IMR-90 (cell line): ENCODE measurements at regions of chr10 and their contacts with region 1.

Region 1: DNA sequence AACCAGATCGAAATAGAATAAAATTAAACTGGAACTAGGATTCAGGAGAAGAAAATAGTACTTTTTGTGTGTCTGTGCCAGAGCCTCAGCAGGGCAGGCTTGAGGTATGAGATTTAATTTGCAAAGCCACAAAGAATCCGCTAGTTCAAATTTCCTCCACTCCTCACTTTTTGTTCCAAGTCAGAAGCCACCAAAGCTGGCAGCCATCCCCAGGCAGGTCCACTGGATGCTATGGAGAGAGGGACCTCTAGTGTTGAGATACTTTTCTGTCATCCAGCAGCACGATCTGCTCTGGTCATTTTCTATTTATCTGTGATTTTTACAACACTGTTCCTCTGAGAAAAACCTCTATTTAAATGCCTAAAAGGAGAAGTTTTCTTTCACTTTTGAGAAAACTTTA is 147.9 kb upstream of the FRMD4A start:
- DNase-seq: peak; percentile 84
- ATAC-seq: peak; percentile 89
- H3K4me3 ChIP-seq: no peak overlapping the region
- H3K27ac ChIP-seq: no peak overlapping the region
- H3K4me1 ChIP-seq: peaks cover 16% of the 10 kb centered on the region; the same call in 1 of the 2 replicates
- H3K27me3 ChIP-seq: no peaks in the 10 kb centered on the region
- CTCF ChIP-seq: peak; percentile 93
- POLR2A ChIP-seq: peak; percentile 61
- RAD21 ChIP-seq: peak; percentile 98

Region 2: DNA sequence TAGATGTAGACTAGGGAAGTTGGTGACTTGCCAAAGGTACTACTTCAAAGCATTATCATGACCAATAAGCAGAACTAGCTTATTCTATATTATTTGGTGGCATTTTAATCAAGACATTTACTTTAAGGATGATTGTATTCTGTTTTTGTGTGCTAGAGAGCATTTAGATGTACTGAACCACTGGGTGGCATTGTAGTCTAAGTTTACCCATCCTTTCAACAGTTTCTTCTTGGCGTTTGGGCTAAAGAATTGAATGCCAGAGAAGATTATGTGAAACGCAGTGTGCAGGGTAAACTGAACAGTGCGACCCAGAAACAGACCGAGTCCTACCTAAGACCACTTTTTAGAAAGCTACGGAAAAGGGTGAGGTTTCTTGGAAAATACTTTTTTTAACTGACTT is 865.1 kb before region 1 on chr10:
- CTCF ChIA-PET with region 1: no interaction called
- POLR2A ChIA-PET with region 1: no interaction called
- dilution Hi-C with region 1: no loop called
- in situ Hi-C with region 1: no loop called
- intact Hi-C with region 1: loop called (anchors 10 kb)
- DNase-seq: peak; percentile 68
- ATAC-seq: peak; percentile 50
- H3K4me3 ChIP-seq: no peak overlapping the region
- H3K27ac ChIP-seq: no peak overlapping the region
- H3K4me1 ChIP-seq: peaks cover 8% of the 10 kb centered on the region; the same call in 1 of the 2 replicates
- H3K27me3 ChIP-seq: no peaks in the 10 kb centered on the region
- CTCF ChIP-seq: peak; percentile 63
- POLR2A ChIP-seq: no peak
- RAD21 ChIP-seq: peak; percentile 72

Region 3: GRCh38 chr10:14093730-14094484 is 384.7 kb before region 1 on chr10:
- CTCF ChIA-PET with region 1: no interaction called
- POLR2A ChIA-PET with region 1: no interaction called
- dilution Hi-C with region 1: no loop called
- in situ Hi-C with region 1: no loop called
- intact Hi-C with region 1: loop called (anchors 1 kb)
- DNase-seq: peak; percentile 66
- ATAC-seq: peak; percentile 75
- H3K4me3 ChIP-seq: no peak overlapping the region
- H3K27ac ChIP-seq: no peak overlapping the region
- H3K4me1 ChIP-seq: no peaks in the 10 kb centered on the region
- H3K27me3 ChIP-seq: no peaks in the 10 kb centered on the region
- CTCF ChIP-seq: peak; percentile 86
- POLR2A ChIP-seq: no peak
- RAD21 ChIP-seq: peak; percentile 91

Region 4: GRCh38 chr10:14200698-14201544 is 277.7 kb before region 1 on chr10:
- CTCF ChIA-PET with region 1: interaction called, 8 read pairs
- POLR2A ChIA-PET with region 1: no interaction called
- dilution Hi-C with region 1: no loop called
- in situ Hi-C with region 1: loop called (anchors 5 kb)
- intact Hi-C with region 1: loop called (anchors 1 kb)
- DNase-seq: peak; percentile 9
- ATAC-seq: no peak; the same call in 1 of the 2 replicates
- H3K4me3 ChIP-seq: no peak overlapping the region
- H3K27ac ChIP-seq: no peak overlapping the region
- H3K4me1 ChIP-seq: no peaks in the 10 kb centered on the region
- H3K27me3 ChIP-seq: peaks cover 16% of the 10 kb centered on the region
- CTCF ChIP-seq: 0 out of 2 replicates have a peak, but pooled peaks have one; percentile 16
- POLR2A ChIP-seq: no peak
- RAD21 ChIP-seq: 0 out of 2 replicates have a peak, but pooled peaks have one; percentile 2

Region 5: GRCh38 chr10:14220026-14220425 is 258.6 kb before region 1 on chr10:
- CTCF ChIA-PET with region 1: no interaction called
- POLR2A ChIA-PET with region 1: no interaction called
- dilution Hi-C with region 1: no loop called
- in situ Hi-C with region 1: no loop called
- intact Hi-C with region 1: no loop called
- DNase-seq: peak; percentile 13
- ATAC-seq: no peak
- H3K4me3 ChIP-seq: no peak overlapping the region
- H3K27ac ChIP-seq: no peak overlapping the region
- H3K4me1 ChIP-seq: peaks cover 3% of the 10 kb centered on the region
- H3K27me3 ChIP-seq: peaks cover 67% of the 10 kb centered on the region
- CTCF ChIP-seq: no peak
- POLR2A ChIP-seq: no peak
- RAD21 ChIP-seq: no peak

Region 6: GRCh38 chr10:14302035-14302434 is 176.6 kb before region 1 on chr10:
- CTCF ChIA-PET with region 1: no interaction called
- POLR2A ChIA-PET with region 1: no interaction called
- dilution Hi-C with region 1: no loop called
- in situ Hi-C with region 1: no loop called
- intact Hi-C with region 1: loop called (anchors 10 kb)
- DNase-seq: peak; percentile 43
- ATAC-seq: 0 out of 2 replicates have a peak, but pooled peaks have one; percentile 27
- H3K4me3 ChIP-seq: no peak overlapping the region
- H3K27ac ChIP-seq: no peak overlapping the region
- H3K4me1 ChIP-seq: no peaks in the 10 kb centered on the region
- H3K27me3 ChIP-seq: peaks cover 65% of the 10 kb centered on the region
- CTCF ChIP-seq: peak; percentile 53
- POLR2A ChIP-seq: no peak
- RAD21 ChIP-seq: peak; percentile 52

Region 7: GRCh38 chr10:14397066-14397465 is 81.5 kb before region 1 on chr10:
- CTCF ChIA-PET with region 1: interaction called, 3 read pairs
- POLR2A ChIA-PET with region 1: no interaction called
- dilution Hi-C with region 1: no loop called
- in situ Hi-C with region 1: no loop called
- intact Hi-C with region 1: loop called (anchors 5 kb)
- DNase-seq: peak; percentile 100
- ATAC-seq: peak; percentile 92
- H3K4me3 ChIP-seq: no peak overlapping the region
- H3K27ac ChIP-seq: peak overlapping the region; percentile 47; the same call in 1 of the 2 replicates
- H3K4me1 ChIP-seq: peaks cover 20% of the 10 kb centered on the region
- H3K27me3 ChIP-seq: no peaks in the 10 kb centered on the region
- CTCF ChIP-seq: no peak
- POLR2A ChIP-seq: peak; percentile 47
- RAD21 ChIP-seq: peak; percentile 8; the same call in 1 of the 2 replicates